Stomach (tissue), 19 donors: ENCODE measurements at regions of chr7 and their contacts with region 1.

Region 1: DNA sequence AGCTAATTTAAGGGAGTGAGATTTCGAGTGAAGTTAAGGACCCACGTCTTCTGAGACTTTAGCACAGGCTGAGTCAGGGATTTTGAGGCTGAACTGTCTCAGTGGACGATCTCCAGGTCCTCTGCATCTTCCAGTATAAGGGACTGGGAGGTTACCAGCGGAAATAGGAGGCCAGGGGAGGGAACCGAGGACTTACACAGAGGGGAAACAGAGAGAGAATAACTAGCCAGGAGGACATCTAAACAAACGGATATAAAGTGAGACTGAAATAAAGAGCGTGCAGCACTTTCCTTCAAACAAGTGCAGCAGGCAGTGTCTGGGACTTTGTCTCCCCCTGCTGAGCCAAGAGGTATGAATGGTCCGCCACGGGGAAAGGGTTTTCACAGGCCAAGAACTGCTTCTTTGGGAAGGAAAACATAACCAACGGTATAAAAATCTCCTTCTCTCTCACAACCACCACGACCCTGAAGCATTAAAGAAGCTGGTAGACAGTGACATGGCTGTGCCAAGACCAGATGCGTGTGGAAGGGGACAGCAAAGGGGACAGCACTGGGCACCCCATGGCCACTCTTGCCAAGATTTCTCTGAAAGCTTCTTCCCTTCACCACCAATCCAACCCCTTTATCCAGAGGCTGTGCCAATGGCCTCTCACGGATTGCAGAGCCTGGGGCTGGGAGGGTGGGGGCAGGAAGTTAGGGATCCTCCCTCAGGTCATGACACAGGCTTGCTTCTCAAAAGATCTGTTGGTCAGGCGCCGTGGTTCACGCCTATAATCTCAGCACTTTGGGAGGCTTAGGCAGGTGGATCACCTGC is 72.0 kb downstream of the SLC37A3 start:
- DNase-seq: peak; percentile 74 to 89
- H3K4me3 ChIP-seq: peak overlapping the region in 2 of 4 donors; percentile 8 to 16
- H3K27ac ChIP-seq: peak overlapping the region in 2 of 5 donors; percentile 9 to 62
- H3K4me1 ChIP-seq: peaks cover 10 to 24% (median 16%) of the 10 kb centered on the region in 4 donors
- H3K27me3 ChIP-seq: no peaks in the 10 kb centered on the region
- CTCF ChIP-seq: peak in 5 of 7 experiments; percentile 38 to 72 (median 60)
- EP300 ChIP-seq: no peak
- POLR2A ChIP-seq: no peak

Region 2: DNA sequence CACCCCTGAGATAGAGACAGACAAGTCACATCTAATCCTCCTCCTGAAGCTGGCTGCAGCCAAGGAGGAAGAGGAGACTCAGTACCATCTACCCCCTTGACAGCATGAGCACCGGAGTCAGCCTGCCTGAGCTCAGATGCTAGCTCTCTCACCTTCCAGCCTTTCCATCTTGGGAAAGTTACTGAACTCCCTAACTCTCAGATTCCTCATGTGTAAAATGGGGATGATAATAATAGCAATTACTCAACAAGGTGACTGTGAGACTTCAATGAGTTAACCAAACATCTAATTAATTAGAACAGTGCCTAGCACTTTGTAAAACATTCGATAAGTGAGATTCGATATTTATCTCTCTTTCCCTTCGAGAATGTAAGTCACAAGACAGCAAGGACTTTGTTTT is 155.9 kb before region 1 on chr7:
- intact Hi-C with region 1: loop called (anchors 5 kb)
- DNase-seq: no peak
- H3K4me3 ChIP-seq: no peak overlapping the region
- H3K27ac ChIP-seq: no peak overlapping the region
- H3K4me1 ChIP-seq: peaks cover 46 to 96% (median 73%) of the 10 kb centered on the region in 4 donors
- H3K27me3 ChIP-seq: no peaks in the 10 kb centered on the region
- CTCF ChIP-seq: no peak
- EP300 ChIP-seq: no peak
- POLR2A ChIP-seq: no peak

Region 3: DNA sequence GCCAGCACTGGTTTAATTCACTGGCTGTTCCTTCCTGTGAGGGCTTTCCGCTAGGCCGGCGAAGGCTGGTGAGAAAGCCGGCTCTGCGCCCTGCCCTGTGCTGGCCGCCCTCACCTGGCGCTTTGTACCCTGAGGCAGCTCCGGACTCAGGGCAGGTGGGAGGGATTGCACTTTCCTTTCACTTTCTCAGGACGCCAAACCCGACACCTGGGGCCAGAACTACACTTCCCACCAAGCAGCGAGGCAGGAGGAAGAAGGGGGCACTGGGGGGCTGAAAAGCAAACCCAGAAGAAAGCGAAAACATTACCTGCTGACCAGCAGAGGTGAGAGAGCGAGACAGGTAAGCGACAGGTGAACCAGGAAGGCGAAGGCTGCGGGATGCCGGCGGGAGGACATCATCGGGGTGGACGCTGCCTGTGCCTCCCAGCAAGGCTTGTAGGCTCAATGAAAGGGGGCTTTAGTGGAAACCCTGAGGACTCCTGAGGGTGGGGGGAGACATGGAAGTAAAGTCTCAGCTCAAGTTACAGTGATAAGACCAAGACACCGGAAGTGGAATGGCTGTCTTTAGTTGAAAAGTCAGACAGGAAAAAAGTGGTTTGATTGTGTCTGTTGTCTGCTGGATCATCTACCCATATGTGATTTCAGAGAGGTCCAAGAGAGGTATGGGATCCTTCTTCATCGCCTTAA is 77.7 kb after region 1 on chr7 and contains the start of gene RAB19:
- intact Hi-C with region 1: no loop called
- DNase-seq: peak; percentile 77 to 87
- H3K4me3 ChIP-seq: peak within 1 kb of the TSS; percentile 35 to 58 (median 52)
- H3K27ac ChIP-seq: peak within 1 kb of the TSS; percentile 28 to 70 (median 64)
- H3K4me1 ChIP-seq: peaks cover 4 to 18% (median 14%) of the 10 kb centered on the region in 4 donors
- H3K27me3 ChIP-seq: peaks cover 0 to 14% (median 0%) of the 10 kb centered on the region in 3 donors
- CTCF ChIP-seq: no peak
- EP300 ChIP-seq: no peak
- POLR2A ChIP-seq: no peak
- total RNA-seq, gene RAB19: 0.87 to 4.6 (median 4.4) TPM in 3 of 5 donors, not detected in the others